ENCODE measurements at regions of chr7 and their contacts with region 1.

Region 1: GRCh38 chr7:75679060-75679459 is 59.7 kb downstream of the HIP1 start:
- H3K4me3 Mint-ChIP-seq: no peak overlapping the region
- H3K27ac Mint-ChIP-seq: no peak overlapping the region
- H3K4me1 Mint-ChIP-seq: peaks cover 19% of the 10 kb centered on the region
- H3K27me3 Mint-ChIP-seq: no peaks in the 10 kb centered on the region

Region 2: GRCh38 chr7:75694638-75695399 is 15.8 kb after region 1 on chr7:
- intact Hi-C with region 1: no loop called
- H3K4me3 Mint-ChIP-seq: no peak overlapping the region
- H3K27ac Mint-ChIP-seq: no peak overlapping the region
- H3K4me1 Mint-ChIP-seq: peaks cover 5% of the 10 kb centered on the region
- H3K27me3 Mint-ChIP-seq: no peaks in the 10 kb centered on the region

Region 3: GRCh38 chr7:75756991-75757676 is 78.1 kb after region 1 on chr7:
- intact Hi-C with region 1: loop called (anchors 10 kb)
- H3K4me3 Mint-ChIP-seq: no peak overlapping the region
- H3K27ac Mint-ChIP-seq: no peak overlapping the region
- H3K4me1 Mint-ChIP-seq: peaks cover 4% of the 10 kb centered on the region
- H3K27me3 Mint-ChIP-seq: no peaks in the 10 kb centered on the region